ENCODE measurements at regions of chr6 and their contacts with region 1.

Region 1: GRCh38 chr6:10694302-10695085 is at the starts of genes C6orf52 and PAK1IP1:
- DNase-seq: peak; percentile 81
- H3K4me3 Mint-ChIP-seq: peak within 1 kb of the TSS; percentile 93
- H3K27ac Mint-ChIP-seq: peak within 1 kb of the TSS; percentile 100
- H3K4me1 Mint-ChIP-seq: no peaks in the 10 kb centered on the region
- H3K27me3 Mint-ChIP-seq: no peaks in the 10 kb centered on the region
- CTCF ChIP-seq: no peak
- total RNA-seq, gene C6orf52: not detected in 2 replicates
- total RNA-seq, gene PAK1IP1: 14.3 and 15.8 TPM in 2 replicates

Region 2: GRCh38 chr6:10510592-10511367 is 183.7 kb before region 1 on chr6:
- CTCF ChIA-PET with region 1: no interaction called
- intact Hi-C with region 1: loop called (anchors 2 kb)
- DNase-seq: peak; percentile 62
- H3K4me3 Mint-ChIP-seq: no peak overlapping the region
- H3K27ac Mint-ChIP-seq: no peak overlapping the region
- H3K4me1 Mint-ChIP-seq: peaks cover 18% of the 10 kb centered on the region
- H3K27me3 Mint-ChIP-seq: no peaks in the 10 kb centered on the region
- CTCF ChIP-seq: peak; percentile 32

Region 3: DNA sequence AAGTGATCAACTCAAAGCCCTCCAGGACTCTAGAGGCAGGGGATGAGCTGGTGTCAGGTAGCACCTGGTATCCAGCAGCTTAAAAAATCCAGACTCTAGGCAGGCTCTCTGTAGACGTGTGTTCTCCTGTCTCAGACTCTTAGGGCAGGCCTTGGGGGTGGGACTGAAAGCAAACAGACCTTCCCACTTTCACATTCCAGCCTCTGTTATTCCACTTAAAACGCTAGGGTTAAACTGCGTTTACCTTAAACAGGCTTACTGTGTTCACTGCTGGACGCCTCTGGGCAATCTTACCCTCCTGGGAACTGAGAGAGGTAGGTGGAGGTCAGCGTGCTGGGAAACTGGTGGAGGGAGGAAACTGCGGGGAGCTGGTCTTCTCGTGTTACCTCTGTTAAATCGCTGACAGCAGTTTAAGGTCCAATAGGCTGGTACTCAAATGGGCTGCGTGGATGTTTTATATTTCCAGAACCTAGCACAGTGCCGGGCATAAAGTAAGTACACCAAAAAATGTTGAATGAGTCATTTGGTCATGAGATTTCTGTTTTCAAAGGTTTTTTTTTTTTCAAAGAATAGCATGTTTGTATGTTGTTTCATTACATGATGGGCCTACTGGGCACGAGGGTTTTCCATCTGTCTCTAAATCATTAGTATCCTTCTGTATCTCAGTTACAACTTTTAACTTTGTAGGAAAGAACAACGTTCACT is 173.2 kb before region 1 on chr6 and contains the start of gene GCNT2:
- CTCF ChIA-PET with region 1: no interaction called
- intact Hi-C with region 1: no loop called
- DNase-seq: peak; percentile 46
- H3K4me3 Mint-ChIP-seq: peak within 1 kb of the TSS; percentile 54
- H3K27ac Mint-ChIP-seq: peak within 1 kb of the TSS; percentile 66
- H3K4me1 Mint-ChIP-seq: peaks cover 11% of the 10 kb centered on the region
- H3K27me3 Mint-ChIP-seq: no peaks in the 10 kb centered on the region
- CTCF ChIP-seq: no peak
- total RNA-seq, gene GCNT2: 14.3 and 18.0 TPM in 2 replicates

Region 4: DNA sequence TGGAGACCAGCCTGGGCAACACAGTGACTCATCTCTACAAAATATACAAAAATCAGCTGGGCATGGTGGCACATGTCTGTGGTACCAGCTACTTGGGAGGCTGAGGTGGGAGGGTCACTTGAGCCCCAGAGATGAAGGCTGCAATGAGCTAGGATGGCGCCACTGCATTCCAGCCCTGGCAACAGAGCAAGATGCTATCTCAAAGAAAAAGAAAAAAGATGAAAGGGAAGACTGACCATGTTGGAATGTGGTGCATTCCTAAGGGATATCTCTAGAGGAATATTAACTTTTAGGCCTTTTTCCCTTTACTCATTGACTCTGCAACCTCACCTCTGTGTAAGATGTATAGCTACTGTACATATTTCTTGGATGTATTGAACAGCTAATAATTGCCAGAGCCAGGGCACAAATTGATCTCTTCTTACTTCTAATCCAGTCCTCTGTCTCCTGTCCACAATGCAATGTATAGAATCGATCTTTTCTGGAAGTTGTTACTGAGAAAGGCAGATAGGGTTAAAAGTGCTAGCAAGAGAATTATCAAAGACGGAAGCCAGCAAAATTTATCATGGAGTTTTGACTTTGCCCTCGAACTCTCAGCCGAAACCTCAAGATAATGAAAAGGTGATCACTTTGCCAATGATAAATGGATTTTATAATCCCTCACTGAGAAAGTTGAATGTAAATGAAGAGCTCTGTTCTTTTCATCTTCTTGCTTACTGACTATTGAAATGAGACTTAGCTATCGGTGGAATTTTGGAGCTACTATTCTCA is 127.1 kb before region 1 on chr6:
- CTCF ChIA-PET with region 1: no interaction called
- intact Hi-C with region 1: no loop called
- DNase-seq: no peak
- H3K4me3 Mint-ChIP-seq: no peak overlapping the region
- H3K27ac Mint-ChIP-seq: no peak overlapping the region
- H3K4me1 Mint-ChIP-seq: peaks cover 7% of the 10 kb centered on the region
- H3K27me3 Mint-ChIP-seq: no peaks in the 10 kb centered on the region
- CTCF ChIP-seq: no peak

Measured in Calu3 (cell line).